Posterior vena cava (tissue), 2 donors: ENCODE measurements at regions of chr19 and their contacts with region 1.

Region 1: GRCh38 chr19:5316138-5316537 is 24.5 kb downstream of the PTPRS start:
- DNase-seq: no peak

Region 2: DNA sequence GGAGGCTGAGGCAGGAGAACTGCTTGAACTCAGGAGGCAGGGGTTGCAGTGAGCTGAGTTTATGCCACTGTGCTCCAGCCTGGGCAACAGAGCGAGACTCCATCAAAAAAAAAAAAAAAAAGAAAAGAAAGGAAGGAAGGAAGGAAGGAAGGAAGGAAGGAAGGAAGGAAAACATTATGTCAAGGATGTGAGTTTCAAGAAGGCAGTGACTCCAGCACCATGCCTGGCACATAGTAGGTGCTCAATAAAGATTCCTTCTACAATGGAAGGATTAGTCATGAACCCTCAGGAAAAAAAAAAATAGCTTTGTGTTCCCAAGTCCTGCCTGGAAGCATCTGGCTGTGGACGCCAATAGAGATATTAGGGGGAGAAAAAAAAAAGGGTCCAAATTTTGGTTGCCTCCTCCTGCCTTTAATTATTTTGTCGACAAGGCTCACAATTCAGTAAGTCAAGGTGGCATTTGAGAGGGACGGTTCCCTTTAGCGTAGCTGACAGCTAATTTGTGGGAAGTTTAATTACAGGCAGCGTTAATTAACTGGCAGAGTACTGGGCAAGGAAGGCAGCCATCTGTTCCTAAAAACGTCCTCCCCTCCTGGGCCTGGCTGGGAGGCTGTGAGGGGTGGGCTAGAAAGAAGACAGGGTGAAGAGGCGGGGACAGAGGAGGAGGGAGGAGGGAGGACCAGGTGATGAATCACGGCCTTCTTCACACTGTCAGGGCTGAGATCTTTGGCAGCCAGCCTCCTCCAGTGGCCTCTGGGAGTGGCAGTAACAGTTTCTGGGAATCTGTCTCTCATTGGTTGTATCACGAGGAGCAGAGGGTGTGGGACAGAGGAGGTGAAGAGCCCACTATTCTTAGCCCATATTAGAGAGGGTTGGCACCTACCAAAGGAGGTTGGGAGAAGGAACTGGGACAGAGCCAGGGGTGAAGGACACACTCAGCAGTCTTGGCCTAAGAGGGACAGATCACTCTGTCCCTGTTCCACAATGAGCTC is 129.2 kb after region 1 on chr19:
- intact Hi-C with region 1: no loop called
- DNase-seq: no peak

Region 3: GRCh38 chr19:6460101-6460853 is 1144.1 kb after region 1 on chr19:
- intact Hi-C with region 1: loop called in 1 of 2 experiments (anchors 5 kb)
- DNase-seq: peak; percentile 99